ENCODE measurements at regions of chr22 and their contacts with region 1.

Region 1: GRCh38 chr22:22666307-22667091 is 22.1 kb downstream of the GGTLC2 start:
- DNase-seq: no peak
- H3K4me3 ChIP-seq: no peak overlapping the region
- CTCF ChIP-seq: peak; percentile 59

Region 2: DNA sequence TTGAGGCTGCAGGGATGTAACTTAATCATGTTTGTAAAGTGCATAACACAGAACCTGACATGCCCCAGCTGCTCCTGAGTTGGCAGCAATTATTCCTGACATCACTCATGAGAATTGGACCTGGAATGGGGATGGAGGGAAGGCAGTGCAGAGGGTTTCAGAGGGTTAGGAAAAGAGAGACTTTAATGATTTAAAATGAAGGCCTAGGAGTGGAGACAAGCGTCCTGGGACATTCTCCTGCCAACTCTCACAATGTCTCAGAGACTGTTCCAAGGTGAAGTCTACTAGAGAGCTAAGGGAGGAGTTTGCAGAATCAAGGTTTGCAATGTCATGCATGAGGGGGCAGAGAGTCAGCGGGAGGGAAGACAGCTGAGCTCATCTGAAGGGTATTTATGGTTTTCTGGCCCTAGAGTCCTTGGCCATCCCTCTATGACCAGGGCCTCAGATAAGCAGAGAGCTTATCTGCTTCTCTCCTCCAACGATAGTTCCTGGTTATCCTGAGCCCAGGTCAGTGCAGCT is 14.8 kb after region 1 on chr22:
- CTCF ChIA-PET with region 1: interaction called, 14 read pairs
- POLR2A ChIA-PET with region 1: no interaction called
- DNase-seq: no peak
- H3K4me3 ChIP-seq: no peak overlapping the region
- CTCF ChIP-seq: no peak

Region 3: GRCh38 chr22:23183061-23183698 is 516.7 kb after region 1 on chr22:
- CTCF ChIA-PET with region 1: no interaction called
- POLR2A ChIA-PET with region 1: no interaction called
- DNase-seq: no peak
- H3K4me3 ChIP-seq: peak overlapping the region; percentile 76
- CTCF ChIP-seq: no peak